Activated CD4-positive, alpha-beta T cell treated with anti-CD3 and anti-CD28 coated beads, Interleukin-2, amount 10 ng/mL, durations not matched to agents 7 days and 5 days (primary cell): ENCODE measurements at regions of chr15 and their contacts with region 1.

Region 1: GRCh38 chr15:74906446-74907162 is at the start of gene FAM219B:
- DNase-seq: peak; percentile 77
- H3K4me3 Mint-ChIP-seq: peak within 1 kb of the TSS; percentile 78
- H3K27ac Mint-ChIP-seq: peak within 1 kb of the TSS; percentile 88
- H3K4me1 Mint-ChIP-seq: peaks cover 41% of the 10 kb centered on the region
- H3K27me3 Mint-ChIP-seq: no peaks in the 10 kb centered on the region
- total RNA-seq, gene FAM219B: 65.8 to 68.2 TPM

Region 2: DNA sequence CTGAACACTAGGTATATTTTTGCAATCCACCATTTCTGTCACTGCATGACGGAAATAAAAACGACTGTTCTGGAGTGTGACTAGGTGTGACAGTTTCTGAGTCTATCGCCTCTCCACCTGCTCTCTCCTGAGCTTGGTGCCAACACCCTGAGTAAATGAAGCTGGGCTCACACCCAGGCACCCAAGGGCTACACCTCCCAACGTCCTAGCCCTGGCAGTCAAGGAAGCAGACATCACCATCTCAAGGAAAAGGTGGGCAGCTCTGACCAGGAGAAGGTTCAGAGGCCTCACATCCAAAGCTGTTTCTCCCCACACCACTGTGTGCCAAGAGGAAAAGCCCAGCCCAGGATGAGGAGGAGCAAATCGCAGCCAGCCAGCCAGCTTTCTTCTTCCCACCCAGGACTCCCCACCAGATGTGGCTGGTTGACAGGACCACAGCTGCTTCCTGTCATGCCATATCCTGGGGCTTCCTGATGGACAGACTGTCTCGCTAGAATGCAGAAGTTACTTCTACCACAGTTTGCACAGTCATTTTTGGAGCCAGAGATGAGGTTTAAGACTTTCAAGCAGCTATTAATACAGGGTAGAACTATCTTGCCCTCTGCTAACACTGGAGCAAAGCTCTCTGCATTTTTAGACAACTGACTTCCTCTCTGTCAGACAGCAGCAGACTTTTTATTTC is 36.7 kb before region 1 on chr15:
- CTCF ChIA-PET with region 1: interaction called, 14 read pairs
- POLR2A ChIA-PET with region 1: no interaction called
- DNase-seq: peak; percentile 57
- H3K4me3 Mint-ChIP-seq: peak overlapping the region; percentile 94
- H3K27ac Mint-ChIP-seq: peak overlapping the region; percentile 90
- H3K4me1 Mint-ChIP-seq: peaks cover 78% of the 10 kb centered on the region
- H3K27me3 Mint-ChIP-seq: no peaks in the 10 kb centered on the region

Region 3: GRCh38 chr15:74884428-74885223 is 22.0 kb before region 1 on chr15:
- CTCF ChIA-PET with region 1: interaction called, 17 read pairs
- POLR2A ChIA-PET with region 1: no interaction called
- DNase-seq: no peak
- H3K4me3 Mint-ChIP-seq: no peak overlapping the region
- H3K27ac Mint-ChIP-seq: no peak overlapping the region
- H3K4me1 Mint-ChIP-seq: peaks cover 28% of the 10 kb centered on the region
- H3K27me3 Mint-ChIP-seq: peaks cover 7% of the 10 kb centered on the region

Region 4: GRCh38 chr15:74889883-74890664 is 16.5 kb before region 1 on chr15 and contains the start of gene MPI:
- CTCF ChIA-PET with region 1: interaction called, 17 read pairs
- POLR2A ChIA-PET with region 1: no interaction called
- DNase-seq: peak; percentile 89
- H3K4me3 Mint-ChIP-seq: peak within 1 kb of the TSS; percentile 92
- H3K27ac Mint-ChIP-seq: peak within 1 kb of the TSS; percentile 88
- H3K4me1 Mint-ChIP-seq: peaks cover 53% of the 10 kb centered on the region
- H3K27me3 Mint-ChIP-seq: no peaks in the 10 kb centered on the region
- total RNA-seq, gene MPI: 58.1 to 64.1 TPM

Region 5: GRCh38 chr15:74995241-74995778 is 88.7 kb after region 1 on chr15 and contains the start of gene SCAMP5:
- CTCF ChIA-PET with region 1: no interaction called
- POLR2A ChIA-PET with region 1: no interaction called
- DNase-seq: peak; percentile 96
- H3K4me3 Mint-ChIP-seq: peak within 1 kb of the TSS; percentile 79
- H3K27ac Mint-ChIP-seq: peak within 1 kb of the TSS; percentile 59
- H3K4me1 Mint-ChIP-seq: peaks cover 12% of the 10 kb centered on the region
- H3K27me3 Mint-ChIP-seq: peaks cover 26% of the 10 kb centered on the region
- total RNA-seq, gene SCAMP5: 2.0 to 3.0 TPM